Right cardiac atrium (tissue), 5 donors: ENCODE measurements at regions of chr1 and their contacts with region 1.

Region 1: DNA sequence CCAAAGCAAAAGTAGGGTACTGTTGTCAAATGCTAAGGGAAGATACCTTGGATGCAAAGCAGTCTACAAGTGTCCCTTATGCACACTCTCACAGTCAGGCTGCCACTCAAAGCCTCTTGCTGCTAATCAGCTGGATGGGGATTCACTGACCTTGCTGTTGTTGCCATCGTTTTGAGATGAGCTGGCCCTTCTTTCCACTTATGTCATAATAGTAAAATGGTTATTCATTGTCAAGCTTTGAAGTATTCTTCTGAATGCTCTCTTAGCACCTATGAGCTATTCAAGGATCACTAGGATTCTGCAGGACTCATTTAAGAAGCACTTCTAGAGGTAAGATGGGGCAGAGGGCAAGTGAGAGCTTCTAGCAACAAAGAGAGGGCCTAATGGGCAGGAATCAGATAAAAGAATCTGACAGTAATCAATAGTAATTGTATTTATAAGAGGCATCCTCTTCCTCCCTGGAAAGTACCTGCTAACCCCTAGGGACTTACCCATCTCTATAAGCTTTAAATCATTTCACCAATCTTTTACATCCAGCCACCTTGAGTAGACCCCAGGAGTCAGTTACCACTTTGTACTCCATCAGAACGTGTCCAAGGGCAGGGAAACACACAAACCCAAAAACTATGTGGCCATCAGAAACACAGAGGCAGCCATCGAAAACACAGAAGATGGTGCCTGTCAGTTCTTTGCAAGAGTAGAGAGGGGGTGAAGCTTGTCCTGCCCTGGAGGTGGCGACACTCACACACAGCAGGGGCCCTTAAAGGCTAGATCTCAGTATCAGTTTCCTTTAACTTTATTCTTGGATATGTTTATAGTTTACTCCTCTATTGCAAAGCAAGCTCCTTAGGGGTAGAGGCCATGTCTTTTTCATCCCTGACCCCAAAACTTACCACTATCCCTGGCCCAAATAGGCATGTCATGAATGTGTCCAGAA is 103.7 kb upstream of the NFIA start:
- DNase-seq: peak in 1 of 3 donors; percentile 48
- ATAC-seq: peak; percentile 56 to 68
- H3K4me3 ChIP-seq: no peak overlapping the region
- H3K27ac ChIP-seq: no peak overlapping the region
- H3K4me1 ChIP-seq: no peaks in the 10 kb centered on the region
- H3K27me3 ChIP-seq: no peaks in the 10 kb centered on the region

Region 2: DNA sequence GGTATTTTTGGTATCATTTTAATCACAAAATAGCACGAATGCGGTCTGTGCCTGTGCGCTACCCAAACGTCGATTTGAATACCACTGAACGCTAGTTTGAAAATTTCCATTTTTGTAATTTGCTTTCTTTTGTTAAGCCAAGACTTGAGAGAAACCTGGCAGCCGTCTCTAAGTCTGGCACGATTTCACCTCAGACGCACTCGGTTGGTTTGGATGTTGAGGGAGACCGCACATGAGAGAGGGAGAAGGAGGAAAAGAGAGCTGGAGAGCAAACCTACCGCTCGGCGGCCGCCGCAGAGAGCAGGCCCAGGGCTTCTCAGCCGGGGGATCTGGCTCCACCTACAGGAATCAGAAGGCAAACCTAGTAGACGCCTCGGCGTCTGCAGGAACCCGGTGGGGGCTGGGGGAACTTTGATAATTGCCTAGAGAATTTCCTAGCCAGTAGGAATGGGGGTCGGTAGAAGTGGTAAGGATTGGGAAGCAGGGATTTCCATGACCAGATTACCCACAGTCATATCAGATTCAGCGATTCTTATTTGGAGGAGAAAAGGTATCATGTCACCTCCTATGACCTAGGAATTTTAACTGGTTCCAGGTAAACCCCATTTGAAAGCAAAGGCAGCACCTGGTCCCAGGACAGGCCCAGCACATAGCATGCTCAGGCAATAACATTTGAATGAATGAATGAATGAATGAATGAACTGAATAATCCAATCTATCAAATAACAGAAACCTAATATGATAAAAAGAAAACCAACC is 663.1 kb after region 1 on chr1:
- intact Hi-C with region 1: loop called in 1 of 4 experiments (anchors 10 kb)
- DNase-seq: peak; percentile 85 to 93 (median 92)
- ATAC-seq: peak; percentile 90
- H3K4me3 ChIP-seq: no peak overlapping the region
- H3K27ac ChIP-seq: peak overlapping the region; percentile 80
- H3K4me1 ChIP-seq: peaks cover 2% of the 10 kb centered on the region
- H3K27me3 ChIP-seq: no peaks in the 10 kb centered on the region